Right ventricle myocardium superior (tissue), 1 donor: ENCODE measurements at regions of chr12 and their contacts with region 1.

Region 1: GRCh38 chr12:64890873-64891468 is 66.5 kb downstream of the TBC1D30 start:
- DNase-seq: no peak
- ATAC-seq: peak; percentile 83

Region 2: DNA sequence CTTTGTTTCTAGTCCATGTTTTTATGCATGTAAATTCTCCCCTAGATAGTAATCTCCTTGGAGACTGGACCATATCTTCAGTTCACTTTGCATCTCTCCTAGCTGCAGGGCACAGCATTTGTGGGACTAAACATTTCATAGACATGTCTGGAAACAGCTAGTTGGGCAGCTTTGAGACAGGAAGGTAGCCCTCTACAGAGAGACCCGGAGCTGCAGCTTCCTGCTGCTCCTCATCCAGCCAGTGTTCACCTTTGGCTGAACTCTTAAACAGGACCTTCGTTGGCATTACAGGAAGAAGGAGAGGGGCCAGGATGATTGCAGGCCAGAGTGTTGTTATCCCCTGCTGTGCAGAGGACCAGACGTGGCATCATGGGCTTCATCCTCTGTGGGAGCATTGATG is 184.7 kb before region 1 on chr12:
- intact Hi-C with region 1: no loop called
- DNase-seq: no peak
- ATAC-seq: peak; percentile 34

Region 3: GRCh38 chr12:65121049-65121955 is 230.3 kb after region 1 on chr12 and contains the start of gene WIF1:
- intact Hi-C with region 1: loop called (anchors 10 kb)
- DNase-seq: peak; percentile 43
- ATAC-seq: peak; percentile 31
- total RNA-seq, gene WIF1: not detected

Region 4: GRCh38 chr12:65232476-65233077 is 341.6 kb after region 1 on chr12:
- intact Hi-C with region 1: loop called (anchors 5 kb)
- DNase-seq: no peak
- ATAC-seq: no peak

Region 5: DNA sequence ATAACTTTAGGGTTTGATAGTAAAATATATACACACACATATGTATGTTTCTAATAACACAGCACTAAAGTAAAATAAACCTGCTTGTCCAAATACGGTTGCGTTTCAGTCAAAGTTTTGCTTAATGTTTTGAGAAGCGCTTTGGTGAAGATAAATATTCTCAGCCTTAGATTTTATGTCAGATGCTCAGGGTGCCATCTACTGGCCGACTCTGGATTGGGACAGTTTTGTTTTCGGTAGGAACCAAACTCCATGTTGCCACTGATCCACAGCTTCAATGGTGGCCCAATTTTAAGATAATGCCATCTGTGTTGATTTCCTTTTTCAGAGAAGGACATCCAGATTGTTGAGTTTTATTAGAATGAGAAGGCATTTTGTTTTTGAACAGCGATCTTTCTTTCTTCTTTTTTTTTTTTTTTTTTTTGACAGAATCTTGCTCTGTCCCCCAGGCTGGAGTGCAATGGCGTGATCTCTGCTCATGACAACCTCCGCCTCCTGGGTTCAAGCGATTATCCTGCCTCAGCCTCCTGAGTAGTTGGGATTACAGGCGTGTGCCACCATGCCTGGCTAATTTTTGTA is 1196.5 kb after region 1 on chr12:
- intact Hi-C with region 1: loop called (anchors 5 kb)
- DNase-seq: peak; percentile 53
- ATAC-seq: peak; percentile 71